ENCODE measurements at regions of chr2 and their contacts with region 1.

Region 1: GRCh38 chr2:200713003-200713703 is 98.6 kb upstream of the BZW1 start:
- DNase-seq: peak; percentile 84 to 98 (median 88)
- ATAC-seq: peak; percentile 96
- H3K4me3 ChIP-seq: peak overlapping the region; percentile 33
- H3K4me3 Mint-ChIP-seq: peak overlapping the region; percentile 77
- H3K27ac ChIP-seq: peak overlapping the region; percentile 81 to 95
- H3K27ac Mint-ChIP-seq: peak overlapping the region; percentile 99
- H3K4me1 ChIP-seq: peaks cover 9% of the 10 kb centered on the region
- H3K4me1 Mint-ChIP-seq: peaks cover 13% of the 10 kb centered on the region
- H3K27me3 ChIP-seq: no peaks in the 10 kb centered on the region
- H3K27me3 Mint-ChIP-seq: no peaks in the 10 kb centered on the region
- CTCF ChIP-seq: peak; percentile 89

Region 2: GRCh38 chr2:200373973-200374416 is 339.2 kb before region 1 on chr2:
- CTCF ChIA-PET with region 1: no interaction called
- POLR2A ChIA-PET with region 1: interaction called, 3 read pairs
- intact Hi-C with region 1: loop called in 1 of 2 experiments (anchors 10 kb)
- DNase-seq: peak in 6 of 14 experiments; percentile 7 to 81 (median 64)
- ATAC-seq: peak; percentile 90
- H3K4me3 ChIP-seq: peak overlapping the region; percentile 52
- H3K4me3 Mint-ChIP-seq: peak overlapping the region; percentile 88
- H3K27ac ChIP-seq: peak overlapping the region; percentile 36 to 56
- H3K27ac Mint-ChIP-seq: peak overlapping the region; percentile 88
- H3K4me1 ChIP-seq: peaks cover 28% of the 10 kb centered on the region
- H3K4me1 Mint-ChIP-seq: peaks cover 58% of the 10 kb centered on the region
- H3K27me3 ChIP-seq: no peaks in the 10 kb centered on the region
- H3K27me3 Mint-ChIP-seq: no peaks in the 10 kb centered on the region
- CTCF ChIP-seq: no peak

Region 3: GRCh38 chr2:200525882-200526651 is 187.1 kb before region 1 on chr2 and contains the start of gene SGO2:
- CTCF ChIA-PET with region 1: interaction called, 3 read pairs
- POLR2A ChIA-PET with region 1: no interaction called
- intact Hi-C with region 1: loop called (anchors 5 kb)
- DNase-seq: peak; percentile 90 to 98 (median 94)
- ATAC-seq: peak; percentile 99
- H3K4me3 ChIP-seq: peak within 1 kb of the TSS; percentile 71
- H3K4me3 Mint-ChIP-seq: peak within 1 kb of the TSS; percentile 96
- H3K27ac ChIP-seq: peak within 1 kb of the TSS in 1 of 2 donors; percentile 0
- H3K27ac Mint-ChIP-seq: peak within 1 kb of the TSS; percentile 83
- H3K4me1 ChIP-seq: peaks cover 9% of the 10 kb centered on the region
- H3K4me1 Mint-ChIP-seq: peaks cover 13% of the 10 kb centered on the region
- H3K27me3 ChIP-seq: no peaks in the 10 kb centered on the region
- H3K27me3 Mint-ChIP-seq: no peaks in the 10 kb centered on the region
- CTCF ChIP-seq: no peak
- total RNA-seq, gene SGO2: 0.64 to 0.74 TPM

Region 4: DNA sequence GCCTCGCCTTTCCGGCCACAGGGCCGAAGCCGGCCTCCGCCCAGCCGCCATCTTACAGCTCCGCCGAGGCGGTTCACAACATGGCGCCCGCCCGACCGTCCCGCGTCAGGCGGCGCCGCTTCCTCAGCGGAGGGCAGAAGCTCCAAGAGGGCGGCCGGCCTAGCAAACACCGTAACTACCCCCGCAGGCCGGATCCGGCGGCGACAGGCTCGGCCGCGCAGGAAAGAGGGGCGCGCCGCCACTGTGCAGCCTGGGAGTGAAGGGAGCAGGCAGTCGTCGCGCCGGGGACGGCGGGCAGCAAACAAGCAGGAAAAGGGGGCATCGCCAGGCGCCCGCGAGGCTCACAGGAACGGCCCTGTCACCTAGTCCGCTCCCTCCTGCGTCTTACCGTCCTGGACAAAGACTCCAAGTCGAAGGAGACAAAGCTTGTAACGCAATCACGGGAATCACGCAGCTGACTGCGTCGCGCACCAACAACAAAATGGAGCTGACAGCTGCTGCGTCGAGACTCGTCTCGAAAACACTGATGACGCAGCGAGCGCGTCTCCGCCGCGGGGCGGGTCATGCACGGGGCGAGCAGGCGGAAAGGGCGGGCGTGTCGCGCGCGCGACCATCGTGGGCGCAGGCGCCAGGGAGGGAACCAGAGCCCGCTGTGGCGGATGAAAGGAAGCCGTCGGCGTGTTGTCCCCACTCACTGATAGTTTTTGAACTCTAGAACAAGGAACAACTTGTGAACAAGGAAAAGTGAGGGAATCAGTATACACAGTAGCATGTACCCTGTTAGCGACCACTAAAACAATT is 151.2 kb after region 1 on chr2 and contains the start of gene CLK1:
- CTCF ChIA-PET with region 1: interaction called, 8 read pairs
- POLR2A ChIA-PET with region 1: interaction called, 55 read pairs
- intact Hi-C with region 1: loop called (anchors 1 to 2 kb)
- DNase-seq: peak; percentile 95 to 98 (median 97)
- ATAC-seq: peak; percentile 75
- H3K4me3 ChIP-seq: peak within 1 kb of the TSS; percentile 96
- H3K4me3 Mint-ChIP-seq: peak within 1 kb of the TSS; percentile 97
- H3K27ac ChIP-seq: peak within 1 kb of the TSS; percentile 100
- H3K27ac Mint-ChIP-seq: peak within 1 kb of the TSS; percentile 88
- H3K4me1 ChIP-seq: peaks cover 26% of the 10 kb centered on the region
- H3K4me1 Mint-ChIP-seq: peaks cover 48% of the 10 kb centered on the region
- H3K27me3 ChIP-seq: no peaks in the 10 kb centered on the region
- H3K27me3 Mint-ChIP-seq: peaks cover 4% of the 10 kb centered on the region
- CTCF ChIP-seq: no peak
- total RNA-seq, gene CLK1: 1,228 to 1,235 TPM

Region 5: GRCh38 chr2:200901459-200902072 is 188.4 kb after region 1 on chr2:
- CTCF ChIA-PET with region 1: interaction called, 7 read pairs
- POLR2A ChIA-PET with region 1: interaction called, 10 read pairs
- intact Hi-C with region 1: loop called (anchors 1 to 5 kb)
- DNase-seq: peak; percentile 42 to 91 (median 57)
- ATAC-seq: peak; percentile 100
- H3K4me3 ChIP-seq: no peak overlapping the region
- H3K4me3 Mint-ChIP-seq: no peak overlapping the region
- H3K27ac ChIP-seq: no peak overlapping the region
- H3K27ac Mint-ChIP-seq: peak overlapping the region; percentile 21
- H3K4me1 ChIP-seq: no peaks in the 10 kb centered on the region
- H3K4me1 Mint-ChIP-seq: peaks cover 6% of the 10 kb centered on the region
- H3K27me3 ChIP-seq: no peaks in the 10 kb centered on the region
- H3K27me3 Mint-ChIP-seq: no peaks in the 10 kb centered on the region
- CTCF ChIP-seq: peak; percentile 84

Region 6: DNA sequence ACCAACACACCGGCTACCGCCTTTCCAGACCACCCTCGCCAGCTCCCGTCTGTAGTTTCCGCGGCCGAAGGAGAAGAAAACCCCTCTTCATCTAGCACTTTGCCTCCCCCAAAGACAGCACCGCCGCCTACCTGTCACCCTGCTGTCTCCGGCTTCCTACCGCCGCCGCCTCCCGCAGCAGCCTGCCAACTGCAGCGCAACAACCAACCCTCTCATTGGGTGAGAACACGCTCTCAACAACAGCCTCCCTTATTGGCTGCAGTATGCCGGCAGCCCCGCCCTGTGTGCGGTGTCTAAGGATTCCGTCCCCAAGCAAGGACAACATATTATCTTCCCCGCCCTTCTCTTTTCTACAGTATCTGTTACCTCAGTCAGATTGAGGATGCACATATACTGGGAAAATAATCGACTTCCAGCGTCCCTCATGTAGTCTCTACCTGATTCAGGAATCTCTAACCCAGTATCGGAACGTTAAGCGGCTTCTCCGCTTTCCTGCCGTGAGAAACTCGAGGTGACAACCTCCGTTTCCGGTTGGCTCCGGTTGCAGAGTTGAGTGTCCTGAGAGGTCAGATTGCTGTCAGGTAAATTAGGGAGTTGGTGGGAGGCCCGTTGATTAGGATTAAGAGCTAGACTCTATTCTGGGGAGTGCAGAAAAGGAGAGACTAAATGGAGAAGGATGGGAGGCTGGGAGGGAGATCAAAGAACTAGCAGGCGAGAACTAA is 358.5 kb after region 1 on chr2 and contains the starts of genes HYCC2 and NDUFB3:
- CTCF ChIA-PET with region 1: no interaction called
- POLR2A ChIA-PET with region 1: interaction called, 25 read pairs
- intact Hi-C with region 1: loop called (anchors 2 to 5 kb)
- DNase-seq: peak; percentile 85 to 98 (median 90)
- ATAC-seq: peak; percentile 92
- H3K4me3 ChIP-seq: peak within 1 kb of the TSS; percentile 87
- H3K4me3 Mint-ChIP-seq: peak within 1 kb of the TSS; percentile 99
- H3K27ac ChIP-seq: peak within 1 kb of the TSS; percentile 84 to 93
- H3K27ac Mint-ChIP-seq: peak within 1 kb of the TSS; percentile 97
- H3K4me1 ChIP-seq: peaks cover 18% of the 10 kb centered on the region
- H3K4me1 Mint-ChIP-seq: peaks cover 50% of the 10 kb centered on the region
- H3K27me3 ChIP-seq: no peaks in the 10 kb centered on the region
- H3K27me3 Mint-ChIP-seq: no peaks in the 10 kb centered on the region
- CTCF ChIP-seq: peak; percentile 39
- total RNA-seq, gene HYCC2: 29.2 to 30.7 TPM
- total RNA-seq, gene NDUFB3: 10.1 to 13.6 TPM

Region 7: DNA sequence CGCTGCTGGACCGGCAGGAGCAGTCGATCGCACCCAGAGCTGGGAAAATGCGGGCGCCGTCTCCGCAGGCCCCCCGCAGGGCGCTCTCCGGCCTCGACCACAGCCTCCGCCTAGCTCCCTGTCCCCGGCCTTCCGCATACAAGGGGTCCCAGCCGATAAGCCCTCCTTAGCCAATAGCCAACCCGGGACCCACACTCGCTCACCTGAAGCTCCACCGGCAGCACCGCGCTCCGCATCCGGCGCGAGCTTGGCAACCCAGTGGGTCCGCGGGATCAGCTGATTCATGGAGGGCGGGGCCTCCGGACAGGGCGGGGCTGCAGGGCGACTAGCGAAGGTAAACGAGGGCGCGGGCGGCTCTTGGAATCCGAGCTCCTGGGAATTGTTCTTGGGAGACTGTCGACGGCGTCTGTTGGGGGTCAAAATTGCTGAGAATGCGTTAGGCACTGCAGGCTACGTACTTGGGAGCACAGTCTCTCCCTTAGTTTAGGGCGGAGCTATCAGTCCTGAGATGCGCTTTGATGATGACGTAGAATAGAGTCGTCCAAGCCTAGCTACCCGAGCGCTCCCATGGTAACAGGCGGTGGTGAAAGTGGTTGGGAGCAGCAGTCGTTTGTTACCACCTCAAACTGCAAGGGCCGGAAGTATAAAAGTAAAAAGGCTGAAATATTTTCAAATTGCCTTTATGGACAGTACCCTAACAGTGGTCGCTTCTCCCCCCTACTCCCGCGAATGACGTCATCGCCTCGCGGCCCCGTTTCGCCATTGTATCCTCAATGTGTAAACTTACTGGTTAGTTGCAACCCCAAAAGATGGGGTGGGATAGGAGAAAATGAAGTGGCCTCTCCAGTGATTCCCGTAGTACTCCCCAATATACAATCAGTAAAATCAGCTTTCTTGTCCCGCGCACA is 1067.8 kb after region 1 on chr2 and contains the start of gene ALS2:
- CTCF ChIA-PET with region 1: no interaction called
- POLR2A ChIA-PET with region 1: no interaction called
- intact Hi-C with region 1: loop called in 1 of 2 experiments (anchors 10 kb)
- DNase-seq: peak; percentile 86 to 96 (median 92)
- ATAC-seq: peak; percentile 90
- H3K4me3 ChIP-seq: peak within 1 kb of the TSS; percentile 66
- H3K4me3 Mint-ChIP-seq: peak within 1 kb of the TSS; percentile 98
- H3K27ac ChIP-seq: peak within 1 kb of the TSS; percentile 77 to 88
- H3K27ac Mint-ChIP-seq: peak within 1 kb of the TSS; percentile 93
- H3K4me1 ChIP-seq: peaks cover 15% of the 10 kb centered on the region
- H3K4me1 Mint-ChIP-seq: peaks cover 20% of the 10 kb centered on the region
- H3K27me3 ChIP-seq: no peaks in the 10 kb centered on the region
- H3K27me3 Mint-ChIP-seq: no peaks in the 10 kb centered on the region
- CTCF ChIP-seq: no peak
- total RNA-seq, gene ALS2: 7.0 to 7.2 TPM

Measured in CD4-positive, alpha-beta T cell (primary cell).